HCT116 (cell line): ENCODE measurements at regions of chr9 and their contacts with region 1.

Region 1: DNA sequence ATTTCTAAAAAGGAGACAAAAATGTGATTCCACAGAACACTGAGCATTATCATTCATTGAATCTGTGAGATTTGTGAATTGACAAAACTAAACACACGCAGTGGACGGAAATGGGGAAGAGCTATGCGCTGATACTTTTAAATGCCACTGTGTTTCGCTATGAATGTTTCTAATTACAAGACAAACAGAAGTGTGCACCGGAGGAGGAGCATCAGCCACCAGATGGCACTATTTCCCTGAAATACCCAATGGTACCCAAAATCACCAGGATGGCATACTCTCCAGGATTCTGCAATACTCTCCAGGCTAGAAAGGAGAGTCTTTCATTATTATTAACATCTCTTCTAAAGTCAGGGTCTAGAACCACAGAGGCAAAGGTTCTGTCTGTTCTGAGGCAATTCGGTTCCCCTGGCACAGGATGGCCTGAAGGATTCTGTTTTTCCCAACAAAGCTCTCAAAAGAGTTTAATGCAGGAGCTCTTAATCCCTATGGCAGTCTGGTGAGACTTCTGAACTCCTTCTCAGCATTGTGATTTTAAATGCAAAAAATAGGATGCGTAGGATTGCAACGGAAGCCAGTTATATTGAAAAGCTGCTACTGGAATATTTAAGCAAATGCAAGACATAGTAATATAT is 13.8 kb upstream of the PUM3 start:
- DNase-seq: peak; percentile 56
- ATAC-seq: peak; percentile 87
- H3K4me3 ChIP-seq: no peak overlapping the region
- H3K27ac ChIP-seq: no peak overlapping the region
- H3K4me1 ChIP-seq: no peaks in the 10 kb centered on the region
- H3K27me3 ChIP-seq: peaks cover 27% of the 10 kb centered on the region
- CTCF ChIP-seq: peak; percentile 72 to 92 (median 82)
- POLR2A ChIP-seq: no peak
- RAD21 ChIP-seq: peak; percentile 75

Region 2: GRCh38 chr9:1354086-1354485 is 1503.6 kb before region 1 on chr9:
- CTCF ChIA-PET with region 1: no interaction called
- POLR2A ChIA-PET with region 1: no interaction called
- RAD21 ChIA-PET with region 1: no interaction called
- intact Hi-C with region 1: no loop called
- DNase-seq: no peak
- ATAC-seq: no peak
- H3K4me3 ChIP-seq: no peak overlapping the region
- H3K27ac ChIP-seq: no peak overlapping the region
- H3K4me1 ChIP-seq: no peaks in the 10 kb centered on the region
- H3K27me3 ChIP-seq: no peaks in the 10 kb centered on the region
- CTCF ChIP-seq: no peak
- POLR2A ChIP-seq: no peak
- RAD21 ChIP-seq: no peak

Region 3: DNA sequence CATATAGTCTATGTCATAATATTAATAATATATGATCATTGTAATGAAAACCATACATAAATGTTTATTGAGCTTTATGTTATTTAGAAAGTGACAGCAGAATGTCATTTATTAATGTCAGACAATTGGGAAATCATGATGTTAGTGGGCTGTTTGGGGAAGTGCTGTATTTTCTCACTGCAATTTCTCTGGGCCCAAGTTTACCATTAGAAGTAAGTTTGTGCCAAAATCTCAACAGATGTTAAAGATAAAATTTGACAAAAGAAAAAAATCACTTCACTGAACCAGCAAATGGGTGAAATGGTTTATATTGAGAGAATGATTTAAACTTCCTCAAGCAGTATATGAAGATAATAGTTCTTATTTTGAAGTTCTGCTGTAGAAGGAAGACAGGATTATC is 1275.8 kb before region 1 on chr9:
- CTCF ChIA-PET with region 1: no interaction called
- POLR2A ChIA-PET with region 1: no interaction called
- RAD21 ChIA-PET with region 1: no interaction called
- intact Hi-C with region 1: no loop called
- DNase-seq: no peak
- ATAC-seq: no peak
- H3K4me3 ChIP-seq: no peak overlapping the region
- H3K27ac ChIP-seq: no peak overlapping the region
- H3K4me1 ChIP-seq: no peaks in the 10 kb centered on the region
- H3K27me3 ChIP-seq: no peaks in the 10 kb centered on the region
- CTCF ChIP-seq: no peak
- POLR2A ChIP-seq: no peak
- RAD21 ChIP-seq: no peak

Region 4: DNA sequence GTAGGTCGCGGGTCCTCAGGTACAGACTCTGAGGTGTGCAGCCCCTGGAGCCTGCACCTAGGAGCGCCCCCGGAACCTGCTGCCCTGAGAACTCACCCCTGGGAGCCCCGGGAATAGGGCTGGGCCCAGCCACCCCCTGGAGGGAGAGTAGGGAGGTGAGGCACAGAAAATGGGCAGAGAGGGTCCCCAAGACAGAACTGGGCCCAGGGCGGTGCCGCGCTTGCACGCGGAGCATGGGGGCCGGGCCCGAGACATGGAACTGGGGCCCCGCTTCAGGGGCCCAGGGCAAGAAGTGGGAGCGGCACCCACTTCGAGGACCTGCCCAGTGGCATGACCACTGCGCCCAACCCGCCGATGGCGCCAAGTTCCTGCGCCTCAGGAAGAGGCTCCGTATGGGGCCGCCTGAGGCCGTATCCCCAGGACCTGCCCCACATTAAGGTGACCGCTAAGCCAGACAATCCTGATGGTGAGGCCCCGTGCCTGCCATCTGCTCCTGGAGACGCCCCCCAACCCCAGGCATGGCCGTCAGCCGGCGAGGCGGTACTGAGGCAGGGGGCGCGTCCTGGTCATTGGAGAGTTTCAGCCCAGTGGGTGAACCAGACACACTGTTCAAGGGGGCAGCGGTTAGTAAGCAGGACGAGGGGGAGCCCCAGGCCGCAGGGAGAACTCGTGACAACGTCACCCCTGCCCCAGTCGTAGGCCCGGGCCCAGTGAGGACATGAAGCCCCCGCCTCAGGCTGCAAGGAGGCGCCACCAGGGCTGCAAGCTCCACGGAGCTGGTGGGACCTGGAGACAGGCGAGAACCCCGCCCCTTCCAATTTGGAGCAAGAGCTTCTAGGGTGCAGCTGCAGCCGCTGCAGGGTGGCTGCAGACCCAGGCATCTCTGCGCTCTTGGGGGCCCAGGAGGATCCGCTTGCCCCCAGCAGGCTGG is 75.7 kb after region 1 on chr9:
- CTCF ChIA-PET with region 1: no interaction called
- POLR2A ChIA-PET with region 1: no interaction called
- RAD21 ChIA-PET with region 1: no interaction called
- intact Hi-C with region 1: no loop called
- DNase-seq: no peak
- ATAC-seq: no peak
- H3K4me3 ChIP-seq: no peak overlapping the region
- H3K27ac ChIP-seq: no peak overlapping the region
- H3K4me1 ChIP-seq: no peaks in the 10 kb centered on the region
- H3K27me3 ChIP-seq: peaks cover 45% of the 10 kb centered on the region
- CTCF ChIP-seq: no peak
- POLR2A ChIP-seq: no peak
- RAD21 ChIP-seq: no peak

Region 5: DNA sequence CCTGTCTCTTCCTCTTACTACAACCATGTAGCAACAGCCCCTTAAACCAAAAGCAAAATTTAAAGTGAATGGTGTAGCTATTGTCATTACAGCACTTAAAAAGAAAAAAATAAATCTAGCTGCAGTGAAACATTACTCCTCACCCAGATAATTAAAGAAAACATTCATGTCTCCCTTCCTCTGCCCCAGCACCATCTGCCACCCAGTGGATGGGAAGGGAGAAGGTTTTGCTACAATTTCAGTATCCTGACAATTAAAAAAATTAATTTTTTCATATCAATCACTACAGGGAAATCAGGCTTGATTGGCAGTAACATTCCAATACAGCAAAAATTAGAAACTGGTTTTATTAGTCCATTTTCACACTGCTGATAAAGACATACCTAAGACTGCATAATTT is 133.6 kb after region 1 on chr9:
- CTCF ChIA-PET with region 1: interaction called, 5 read pairs
- POLR2A ChIA-PET with region 1: no interaction called
- RAD21 ChIA-PET with region 1: no interaction called
- intact Hi-C with region 1: loop called (anchors 5 kb)
- DNase-seq: no peak
- ATAC-seq: no peak
- H3K4me3 ChIP-seq: no peak overlapping the region
- H3K27ac ChIP-seq: no peak overlapping the region
- H3K4me1 ChIP-seq: no peaks in the 10 kb centered on the region
- H3K27me3 ChIP-seq: peaks cover 23% of the 10 kb centered on the region; the same call in 1 of the 2 replicates
- CTCF ChIP-seq: peak in 2 of 3 experiments; percentile 31 to 40; a peak in 3 of 6 replicates
- POLR2A ChIP-seq: no peak
- RAD21 ChIP-seq: peak; percentile 26; the same call in 1 of the 2 replicates

Region 6: DNA sequence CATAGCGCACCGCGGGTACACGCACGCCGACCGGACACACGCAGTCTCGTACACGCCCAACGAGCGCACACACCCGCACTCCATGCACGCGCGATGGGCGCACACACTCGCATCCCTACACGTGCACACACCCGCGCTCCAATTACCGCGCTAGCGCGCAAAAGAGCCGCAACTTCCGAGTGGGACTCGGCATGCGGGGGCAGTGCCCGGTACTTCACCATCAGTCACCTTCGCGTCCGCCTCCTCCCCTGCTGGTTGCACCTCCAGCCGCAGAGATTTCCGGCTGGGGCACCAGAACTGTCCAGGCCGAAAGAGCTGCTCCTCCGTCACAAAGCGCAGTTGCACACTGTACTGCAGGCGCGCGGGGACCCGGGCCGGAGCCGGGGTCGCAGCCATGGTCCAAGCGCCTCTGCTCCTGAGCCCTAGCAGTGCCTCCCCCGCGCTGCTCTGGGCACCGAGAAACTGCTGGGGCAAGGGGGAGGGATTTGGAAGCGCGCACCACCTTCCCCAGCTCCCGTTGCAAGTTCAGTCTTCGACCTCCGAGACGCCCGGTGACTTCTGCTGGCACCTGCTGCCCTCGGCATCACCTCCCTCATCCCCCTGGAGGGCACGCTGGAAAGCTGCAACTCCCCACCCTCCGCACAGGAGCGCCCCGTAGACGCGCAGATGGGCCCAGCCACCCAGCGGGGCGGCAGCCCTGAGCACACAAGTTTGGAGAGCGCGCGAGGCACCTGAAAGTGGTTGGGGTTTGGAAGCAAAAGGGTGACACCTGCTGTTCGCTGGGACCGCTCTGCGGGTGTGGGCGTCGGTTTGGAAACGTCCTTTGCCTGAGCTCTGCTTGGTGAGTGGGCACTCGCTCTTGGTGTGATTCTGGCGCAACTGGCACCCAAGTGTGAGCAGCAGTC is 323.6 kb after region 1 on chr9:
- CTCF ChIA-PET with region 1: interaction called, 8 read pairs
- POLR2A ChIA-PET with region 1: no interaction called
- RAD21 ChIA-PET with region 1: no interaction called
- intact Hi-C with region 1: loop called (anchors 1 kb)
- DNase-seq: no peak
- ATAC-seq: peak; percentile 77
- H3K4me3 ChIP-seq: no peak overlapping the region
- H3K27ac ChIP-seq: no peak overlapping the region
- H3K4me1 ChIP-seq: no peaks in the 10 kb centered on the region
- H3K27me3 ChIP-seq: peaks cover 50% of the 10 kb centered on the region
- CTCF ChIP-seq: peak; percentile 14 to 38 (median 34); a peak in 4 of 6 replicates
- POLR2A ChIP-seq: no peak
- RAD21 ChIP-seq: peak; percentile 52

Region 7: DNA sequence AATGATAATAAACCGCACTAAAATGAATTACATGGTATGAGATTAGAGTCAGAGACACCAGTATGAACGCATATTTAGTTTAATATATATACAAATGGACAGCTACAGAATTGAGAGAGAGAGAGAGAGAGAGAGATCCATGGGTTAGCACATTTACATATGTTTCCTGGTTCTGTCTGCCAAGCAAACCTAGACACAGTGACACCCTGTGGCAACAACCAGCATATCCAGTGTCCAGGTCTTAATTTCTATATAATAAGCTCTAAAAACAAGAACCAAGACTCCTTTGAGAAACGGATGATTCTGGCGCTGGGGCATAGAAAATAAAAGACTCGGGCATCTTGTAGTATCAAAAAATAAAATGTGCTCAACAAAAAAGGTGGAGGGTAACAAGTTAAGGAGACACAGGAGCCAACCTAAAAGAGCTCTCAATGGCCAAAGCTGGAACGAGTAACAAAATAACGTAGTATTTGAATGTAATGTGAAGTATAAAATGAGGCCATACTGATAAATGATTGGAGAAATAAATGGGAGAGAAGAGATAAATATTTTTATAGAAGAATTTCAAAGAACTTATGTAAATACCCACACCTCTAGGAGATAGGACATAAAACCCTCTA is 583.6 kb after region 1 on chr9:
- CTCF ChIA-PET with region 1: interaction called, 10 read pairs
- POLR2A ChIA-PET with region 1: no interaction called
- RAD21 ChIA-PET with region 1: interaction called, 3 read pairs
- intact Hi-C with region 1: no loop called
- DNase-seq: peak; percentile 51
- ATAC-seq: peak; percentile 87
- H3K4me3 ChIP-seq: no peak overlapping the region
- H3K27ac ChIP-seq: no peak overlapping the region
- H3K4me1 ChIP-seq: no peaks in the 10 kb centered on the region
- H3K27me3 ChIP-seq: no peaks in the 10 kb centered on the region
- CTCF ChIP-seq: peak; percentile 44 to 65 (median 55); a peak in 5 of 6 replicates
- POLR2A ChIP-seq: no peak
- RAD21 ChIP-seq: peak; percentile 46; the same call in 1 of the 2 replicates

Region 8: DNA sequence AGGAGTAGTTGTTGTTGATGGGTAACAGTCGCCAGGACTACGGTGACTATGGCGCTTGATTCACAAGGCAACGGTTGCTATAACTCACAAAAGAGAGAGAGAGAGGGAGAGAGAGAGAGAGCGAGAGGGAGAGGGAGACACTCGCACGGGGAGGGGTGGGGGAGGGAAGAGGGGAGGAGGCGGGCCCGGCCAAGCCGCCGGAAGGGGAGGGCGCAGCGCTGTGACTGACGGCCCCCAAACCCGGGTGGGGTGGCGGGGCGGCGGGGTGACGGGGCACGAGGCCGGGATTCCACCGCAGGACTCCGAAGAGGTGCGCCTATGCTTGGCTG is 668.1 kb after region 1 on chr9 and contains the start of gene RFX3:
- CTCF ChIA-PET with region 1: no interaction called
- POLR2A ChIA-PET with region 1: no interaction called
- RAD21 ChIA-PET with region 1: no interaction called
- intact Hi-C with region 1: loop called (anchors 10 kb)
- DNase-seq: peak; percentile 84
- ATAC-seq: peak; percentile 78
- H3K4me3 ChIP-seq: peak within 1 kb of the TSS; percentile 89 to 90
- H3K27ac ChIP-seq: peak within 1 kb of the TSS; percentile 98
- H3K4me1 ChIP-seq: peaks cover 3 to 22% of the 10 kb centered on the region in 2 experiments; a peak in 2 of 4 replicates
- H3K27me3 ChIP-seq: no peaks in the 10 kb centered on the region
- CTCF ChIP-seq: no peak
- POLR2A ChIP-seq: no peak
- RAD21 ChIP-seq: no peak
- total RNA-seq, gene RFX3: 11.8 TPM

Region 9: DNA sequence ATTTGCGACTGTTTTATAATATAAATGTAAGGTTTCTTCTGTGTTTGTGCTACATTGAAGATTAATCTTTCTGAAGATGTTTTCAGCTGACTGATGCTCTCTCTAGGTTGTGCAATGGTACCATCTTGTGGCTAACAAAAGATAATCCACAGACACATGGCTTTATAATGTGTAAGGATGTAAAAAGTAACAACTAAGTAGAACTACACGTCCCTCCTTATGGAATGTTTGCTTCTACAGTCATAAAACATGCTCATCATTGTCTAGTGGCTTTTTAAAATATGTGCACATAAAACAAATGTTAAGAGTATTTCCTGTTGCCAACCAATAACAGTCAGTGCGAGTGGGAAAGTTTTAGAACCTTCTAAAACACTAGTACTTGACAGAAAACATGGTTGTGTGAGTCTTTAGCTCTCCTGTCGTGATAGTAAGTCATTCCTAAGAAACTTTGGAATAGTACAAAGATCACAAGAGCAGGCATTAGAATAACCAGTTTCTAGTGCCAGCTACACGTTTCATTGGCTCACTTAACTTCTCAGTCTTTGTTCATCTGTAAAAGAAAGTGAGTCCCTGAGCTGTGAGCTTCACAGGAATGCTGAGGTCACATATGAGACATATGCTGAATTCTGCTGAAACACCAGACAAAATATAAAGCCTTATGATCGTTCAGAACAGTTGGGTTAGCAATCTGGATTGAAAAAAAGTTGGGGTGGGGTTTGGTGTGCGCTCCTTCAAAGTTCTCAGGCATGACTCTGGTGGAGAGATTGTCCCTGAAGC is 1517.9 kb after region 1 on chr9:
- CTCF ChIA-PET with region 1: interaction called, 12 read pairs
- POLR2A ChIA-PET with region 1: no interaction called
- RAD21 ChIA-PET with region 1: no interaction called
- intact Hi-C with region 1: loop called (anchors 1 kb)
- DNase-seq: peak; percentile 26
- ATAC-seq: peak; percentile 70
- H3K4me3 ChIP-seq: no peak overlapping the region
- H3K27ac ChIP-seq: no peak overlapping the region
- H3K4me1 ChIP-seq: no peaks in the 10 kb centered on the region
- H3K27me3 ChIP-seq: no peaks in the 10 kb centered on the region
- CTCF ChIP-seq: peak; percentile 21 to 60 (median 55); a peak in 4 of 6 replicates
- POLR2A ChIP-seq: no peak
- RAD21 ChIP-seq: peak; percentile 83